Heart right ventricle (tissue), 16 donors: ENCODE measurements at regions of chr12 and their contacts with region 1.

Region 1: DNA sequence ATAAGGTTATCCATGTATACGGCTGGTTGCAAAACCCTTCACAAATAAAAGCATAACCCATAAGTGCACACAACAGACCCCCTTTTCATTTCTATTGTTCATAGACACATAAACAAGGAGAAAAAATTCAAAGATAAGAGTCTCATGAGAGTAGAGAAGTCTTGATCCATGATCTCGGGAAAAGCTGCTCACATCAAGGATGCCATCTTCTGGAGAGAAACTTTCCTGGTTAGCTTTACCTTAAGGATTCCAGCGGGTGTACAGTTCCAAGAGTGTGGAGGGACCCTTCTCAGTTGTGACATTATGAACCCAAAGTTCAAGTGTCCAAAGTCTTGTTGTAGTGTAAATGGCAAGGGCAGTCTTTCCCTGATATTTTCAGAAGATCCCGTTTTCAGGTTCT is 144.5 kb downstream of the LLPH start:
- DNase-seq: no peak
- ATAC-seq: no peak
- H3K4me3 ChIP-seq: no peak overlapping the region
- H3K27ac ChIP-seq: no peak overlapping the region
- H3K4me1 ChIP-seq: no peaks in the 10 kb centered on the region
- H3K27me3 ChIP-seq: peaks cover 0 to 8% (median 0%) of the 10 kb centered on the region in 7 donors
- CTCF ChIP-seq: peak in 2 of 9 donors; percentile 7 to 25

Region 2: GRCh38 chr12:65602610-65603295 is 383.3 kb before region 1 on chr12:
- intact Hi-C with region 1: loop called in 6 of 10 experiments (anchors 5 to 10 kb)
- DNase-seq: peak; percentile 53 to 81
- ATAC-seq: peak; percentile 94 to 99 (median 96)
- H3K4me3 ChIP-seq: peak overlapping the region in 7 of 10 donors; percentile 2 to 46 (median 26)
- H3K27ac ChIP-seq: peak overlapping the region in 8 of 10 donors; percentile 17 to 70 (median 54)
- H3K4me1 ChIP-seq: peaks cover 0 to 32% (median 15%) of the 10 kb centered on the region in 9 donors
- H3K27me3 ChIP-seq: peaks cover 0 to 33% (median 0%) of the 10 kb centered on the region in 7 donors
- CTCF ChIP-seq: peak; percentile 53 to 85 (median 69)

Region 3: DNA sequence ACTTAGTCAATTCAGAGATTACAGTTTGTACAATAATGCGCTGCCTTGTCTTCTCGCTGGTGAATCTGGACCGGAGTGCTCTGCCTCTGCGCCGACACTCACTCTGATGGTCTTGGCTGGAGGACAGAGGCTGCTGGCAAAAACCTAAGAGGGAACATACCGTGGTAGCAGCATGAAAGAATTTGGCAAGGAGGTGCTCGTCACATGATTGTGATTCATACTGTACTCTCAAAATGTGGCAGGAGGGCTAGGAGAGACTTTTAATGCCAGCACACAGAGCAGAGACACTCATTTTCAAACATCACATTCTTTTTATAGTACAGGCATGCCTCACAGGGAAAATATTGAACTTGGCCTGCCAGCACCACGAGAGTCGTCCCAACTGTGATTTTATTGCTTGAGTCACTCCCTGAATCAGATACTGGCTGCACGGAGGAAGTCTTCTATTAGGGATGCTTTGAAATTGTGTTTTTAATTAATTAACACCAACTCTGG is 94.0 kb before region 1 on chr12:
- intact Hi-C with region 1: loop called in 1 of 10 experiments (anchors 10 kb)
- DNase-seq: peak; percentile 56 to 82
- ATAC-seq: peak; percentile 91 to 100 (median 98)
- H3K4me3 ChIP-seq: peak overlapping the region in 4 of 10 donors; percentile 6 to 17 (median 10)
- H3K27ac ChIP-seq: peak overlapping the region in 5 of 10 donors; percentile 60 to 67 (median 64)
- H3K4me1 ChIP-seq: peaks cover 0 to 20% (median 13%) of the 10 kb centered on the region in 9 donors
- H3K27me3 ChIP-seq: no peaks in the 10 kb centered on the region
- CTCF ChIP-seq: no peak